ENCODE measurements at regions of chr2 and their contacts with region 1.

Region 1: DNA sequence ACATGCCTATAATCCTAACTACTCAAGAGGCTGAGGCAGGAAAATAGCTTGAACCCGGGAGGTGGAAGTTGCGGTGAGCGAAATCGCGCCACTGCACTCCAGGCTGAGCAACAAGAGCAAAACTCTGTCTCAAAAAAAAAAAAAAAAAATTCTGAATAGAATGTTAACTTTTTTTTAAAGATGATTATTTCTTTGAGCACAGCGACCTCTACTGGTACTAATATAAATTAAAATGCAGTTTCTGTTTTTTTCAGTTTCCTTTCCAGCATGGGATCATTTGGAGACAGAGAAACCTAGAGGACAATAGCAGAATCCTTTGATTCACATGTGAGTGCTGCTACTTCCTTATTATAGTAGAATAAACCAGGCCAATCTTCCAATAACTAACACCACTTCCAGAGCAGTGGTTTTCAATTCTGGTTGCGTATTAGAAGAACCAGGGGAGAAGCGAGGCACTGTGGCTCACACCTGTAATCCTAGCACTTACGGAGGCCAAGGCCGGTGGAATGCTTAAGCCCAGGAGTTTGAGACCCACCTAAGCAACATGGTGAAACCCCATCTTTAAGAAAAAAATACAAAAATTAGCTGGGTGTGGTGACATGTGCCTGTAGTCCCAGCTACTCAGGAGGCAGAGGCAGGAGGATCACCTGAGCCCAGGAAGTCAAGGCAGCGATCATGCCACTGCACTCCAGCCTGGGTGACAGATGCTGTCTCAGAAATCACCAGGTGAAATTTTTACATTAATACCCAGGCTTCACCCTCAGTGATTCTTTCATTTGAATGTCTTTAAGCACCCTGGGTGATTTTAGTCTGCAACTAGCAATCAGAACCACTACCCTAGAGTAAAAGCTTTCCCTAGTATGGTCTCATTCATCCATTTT is 10.1 kb downstream of the SRSF7 start:
- DNase-seq: peak; percentile 39
- ATAC-seq: peak; percentile 5
- H3K4me3 Mint-ChIP-seq: no peak overlapping the region
- H3K27ac Mint-ChIP-seq: peak overlapping the region; percentile 47
- H3K4me1 Mint-ChIP-seq: peaks cover 55% of the 10 kb centered on the region
- H3K27me3 Mint-ChIP-seq: no peaks in the 10 kb centered on the region

Region 2: DNA sequence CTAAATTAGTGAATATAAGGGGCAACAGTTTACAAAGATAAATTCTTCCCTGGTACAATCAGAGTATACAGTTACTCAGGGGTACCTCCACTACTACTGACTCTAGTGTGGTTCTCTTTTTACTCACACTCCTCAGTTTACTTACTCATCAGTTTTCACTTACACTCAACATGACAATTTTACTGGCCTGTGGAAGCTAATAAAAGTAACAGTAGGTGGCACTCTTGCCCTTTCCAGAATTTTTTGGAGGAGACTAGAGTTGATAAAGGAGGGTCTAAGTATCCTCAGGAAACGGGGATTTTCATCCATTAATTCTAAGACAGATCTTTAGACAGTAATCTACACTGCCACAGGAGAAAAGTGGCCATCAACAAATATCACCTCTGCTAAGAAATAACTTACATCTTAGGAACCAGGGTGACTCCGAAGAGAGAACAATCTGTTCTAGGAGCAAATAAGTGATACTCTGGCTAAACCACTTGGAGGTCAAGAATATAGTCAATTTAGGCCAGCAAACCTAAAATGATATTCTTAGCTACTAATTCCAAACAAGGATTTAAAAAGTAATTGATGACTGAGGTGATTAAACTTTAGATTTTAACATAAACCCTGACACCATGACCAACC is 425.3 kb before region 1 on chr2:
- CTCF ChIA-PET with region 1: interaction called, 7 read pairs
- POLR2A ChIA-PET with region 1: no interaction called
- intact Hi-C with region 1: loop called in 1 of 2 experiments (anchors 10 kb)
- DNase-seq: peak; percentile 26
- ATAC-seq: peak; percentile 100
- H3K4me3 Mint-ChIP-seq: no peak overlapping the region
- H3K27ac Mint-ChIP-seq: no peak overlapping the region
- H3K4me1 Mint-ChIP-seq: peaks cover 16% of the 10 kb centered on the region
- H3K27me3 Mint-ChIP-seq: no peaks in the 10 kb centered on the region

Region 3: DNA sequence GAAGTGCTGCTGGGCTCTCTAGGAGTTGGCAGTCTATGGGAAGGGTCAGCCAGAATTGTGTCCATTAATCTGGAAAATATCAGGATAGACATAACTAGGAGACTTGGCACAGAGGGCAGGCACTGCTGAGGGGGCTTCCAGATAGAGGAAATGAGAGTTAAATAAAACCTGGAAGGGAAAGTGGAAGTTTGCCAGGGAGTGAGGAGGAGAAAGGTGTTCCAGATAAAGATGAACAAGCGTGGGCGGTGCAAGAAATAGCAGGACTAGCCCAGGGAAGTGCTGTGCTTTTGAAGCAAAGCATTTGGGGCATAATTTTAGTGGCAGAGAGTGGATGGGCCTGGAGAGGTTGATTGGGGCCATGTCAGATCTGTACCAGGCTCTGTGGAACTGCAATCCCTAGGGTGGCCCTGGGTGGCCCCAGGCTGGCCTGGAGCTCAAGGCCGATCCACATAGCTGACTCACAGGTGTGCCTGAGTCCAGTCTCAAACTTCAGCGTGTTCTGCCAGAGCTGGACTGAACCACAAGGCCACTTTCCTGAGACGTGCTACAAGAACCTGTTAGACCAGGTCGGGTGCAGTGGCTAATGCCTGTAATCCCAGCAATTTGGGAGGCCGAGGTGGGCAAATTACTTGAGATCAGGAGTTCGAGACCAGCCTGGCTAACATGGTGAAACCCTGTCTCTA is 48.3 kb before region 1 on chr2:
- CTCF ChIA-PET with region 1: no interaction called
- POLR2A ChIA-PET with region 1: no interaction called
- intact Hi-C with region 1: no loop called
- DNase-seq: no peak
- ATAC-seq: no peak
- H3K4me3 Mint-ChIP-seq: no peak overlapping the region
- H3K27ac Mint-ChIP-seq: peak overlapping the region; percentile 71
- H3K4me1 Mint-ChIP-seq: peaks cover 67% of the 10 kb centered on the region
- H3K27me3 Mint-ChIP-seq: no peaks in the 10 kb centered on the region

Region 4: DNA sequence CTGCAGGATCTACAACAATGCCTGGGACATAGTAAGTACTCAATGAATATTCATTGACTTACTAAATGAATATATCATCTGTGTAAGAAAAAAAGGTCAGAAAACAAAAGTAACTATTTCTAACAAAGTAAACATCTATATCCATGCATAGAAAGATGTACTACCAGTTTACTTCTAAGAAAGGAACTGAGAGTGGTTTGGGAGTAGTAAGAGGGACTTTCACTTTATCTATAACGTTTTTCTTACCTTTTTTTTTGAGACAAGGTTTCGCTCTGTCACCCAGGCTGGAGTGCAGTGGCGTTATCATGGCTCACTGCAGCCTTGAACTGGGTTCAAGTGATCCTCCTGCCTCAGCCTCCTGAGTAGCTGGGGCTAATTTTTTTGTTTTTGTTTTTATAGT is 109.0 kb after region 1 on chr2:
- CTCF ChIA-PET with region 1: no interaction called
- POLR2A ChIA-PET with region 1: no interaction called
- intact Hi-C with region 1: no loop called
- DNase-seq: no peak
- ATAC-seq: peak; percentile 26
- H3K4me3 Mint-ChIP-seq: no peak overlapping the region
- H3K27ac Mint-ChIP-seq: no peak overlapping the region
- H3K4me1 Mint-ChIP-seq: no peaks in the 10 kb centered on the region
- H3K27me3 Mint-ChIP-seq: no peaks in the 10 kb centered on the region